Activated CD8-positive, alpha-beta T cell treated with anti-CD3 and anti-CD28 coated beads for 36 hours (primary cell): ENCODE measurements at regions of chr3 and their contacts with region 1.

Region 1: DNA sequence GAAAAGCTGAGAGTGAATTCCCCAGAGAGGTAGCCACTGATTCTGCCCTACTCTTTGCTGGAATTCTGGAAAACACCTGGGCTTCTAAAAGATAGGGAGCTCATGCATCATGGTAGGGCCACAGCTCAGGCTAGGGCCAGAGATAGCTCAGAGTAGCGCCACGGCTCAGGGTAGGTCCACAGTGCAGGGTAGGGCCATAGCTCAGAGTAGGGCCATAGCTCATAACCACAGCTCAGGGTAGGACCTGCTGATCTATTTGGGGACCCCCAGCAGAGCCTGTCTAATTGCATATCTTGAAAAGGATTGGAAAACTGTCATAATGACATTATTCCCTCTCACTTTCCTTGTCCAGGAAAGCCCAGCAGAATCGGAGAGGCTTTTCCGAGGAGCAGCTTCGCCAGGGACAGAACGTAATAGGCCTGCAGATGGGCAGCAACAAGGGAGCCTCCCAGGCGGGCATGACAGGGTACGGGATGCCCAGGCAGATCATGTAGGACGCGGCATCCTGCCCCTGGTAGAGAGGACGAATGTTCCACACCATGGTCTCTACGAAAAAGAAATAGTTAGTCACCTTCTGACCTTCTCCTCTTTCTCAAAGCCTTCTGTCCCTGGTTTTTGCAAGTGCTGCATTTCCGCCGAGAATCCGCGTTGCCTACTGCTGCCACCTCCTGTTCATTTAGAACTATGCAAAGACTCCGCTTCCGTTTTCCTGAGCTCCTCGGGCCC is 14.5 kb downstream of the TAGLN3 start:
- DNase-seq: peak; percentile 83
- ATAC-seq: peak; percentile 93
- H3K4me3 Mint-ChIP-seq: no peak overlapping the region
- H3K27ac Mint-ChIP-seq: peak overlapping the region; percentile 43
- H3K4me1 Mint-ChIP-seq: peaks cover 21% of the 10 kb centered on the region
- H3K27me3 Mint-ChIP-seq: no peaks in the 10 kb centered on the region
- CTCF ChIP-seq: peak; percentile 86

Region 2: DNA sequence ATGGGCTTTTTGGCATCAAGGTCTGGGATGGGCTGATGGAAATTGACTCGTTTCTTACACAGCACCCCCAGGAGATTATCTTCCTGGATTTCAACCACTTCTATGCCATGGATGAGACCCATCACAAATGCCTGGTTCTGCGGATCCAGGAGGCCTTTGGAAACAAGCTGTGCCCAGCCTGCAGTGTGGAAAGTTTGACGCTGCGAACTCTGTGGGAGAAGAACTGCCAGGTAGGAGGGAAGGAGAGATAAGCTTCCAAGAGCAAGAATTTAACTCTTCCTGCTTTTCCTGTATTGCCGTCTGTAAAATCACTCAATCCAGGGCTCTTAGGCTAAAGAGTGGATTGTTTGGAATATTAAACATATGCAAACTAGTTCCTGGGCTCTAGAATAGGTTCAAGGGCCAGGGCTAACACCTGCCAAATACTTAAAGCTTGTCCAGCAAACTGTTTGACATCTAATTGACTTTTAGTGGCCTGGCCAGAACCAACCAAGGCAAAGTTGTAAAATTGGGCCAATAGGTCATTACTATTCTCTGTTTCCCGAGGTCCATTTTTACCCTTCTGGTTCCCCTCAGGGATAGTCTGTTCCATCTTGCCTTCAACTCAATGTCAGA is 305.0 kb before region 1 on chr3:
- CTCF ChIA-PET with region 1: interaction called, 122 read pairs
- POLR2A ChIA-PET with region 1: no interaction called
- intact Hi-C with region 1: no loop called
- DNase-seq: no peak
- ATAC-seq: no peak
- H3K4me3 Mint-ChIP-seq: no peak overlapping the region
- H3K27ac Mint-ChIP-seq: no peak overlapping the region
- H3K4me1 Mint-ChIP-seq: peaks cover 35% of the 10 kb centered on the region
- H3K27me3 Mint-ChIP-seq: no peaks in the 10 kb centered on the region
- CTCF ChIP-seq: no peak

Region 3: GRCh38 chr3:111870620-111871019 is 142.6 kb before region 1 on chr3:
- CTCF ChIA-PET with region 1: interaction called, 12 read pairs
- POLR2A ChIA-PET with region 1: no interaction called
- intact Hi-C with region 1: no loop called
- DNase-seq: no peak
- ATAC-seq: no peak
- H3K4me3 Mint-ChIP-seq: no peak overlapping the region
- H3K27ac Mint-ChIP-seq: no peak overlapping the region
- H3K4me1 Mint-ChIP-seq: no peaks in the 10 kb centered on the region
- H3K27me3 Mint-ChIP-seq: no peaks in the 10 kb centered on the region
- CTCF ChIP-seq: no peak

Region 4: DNA sequence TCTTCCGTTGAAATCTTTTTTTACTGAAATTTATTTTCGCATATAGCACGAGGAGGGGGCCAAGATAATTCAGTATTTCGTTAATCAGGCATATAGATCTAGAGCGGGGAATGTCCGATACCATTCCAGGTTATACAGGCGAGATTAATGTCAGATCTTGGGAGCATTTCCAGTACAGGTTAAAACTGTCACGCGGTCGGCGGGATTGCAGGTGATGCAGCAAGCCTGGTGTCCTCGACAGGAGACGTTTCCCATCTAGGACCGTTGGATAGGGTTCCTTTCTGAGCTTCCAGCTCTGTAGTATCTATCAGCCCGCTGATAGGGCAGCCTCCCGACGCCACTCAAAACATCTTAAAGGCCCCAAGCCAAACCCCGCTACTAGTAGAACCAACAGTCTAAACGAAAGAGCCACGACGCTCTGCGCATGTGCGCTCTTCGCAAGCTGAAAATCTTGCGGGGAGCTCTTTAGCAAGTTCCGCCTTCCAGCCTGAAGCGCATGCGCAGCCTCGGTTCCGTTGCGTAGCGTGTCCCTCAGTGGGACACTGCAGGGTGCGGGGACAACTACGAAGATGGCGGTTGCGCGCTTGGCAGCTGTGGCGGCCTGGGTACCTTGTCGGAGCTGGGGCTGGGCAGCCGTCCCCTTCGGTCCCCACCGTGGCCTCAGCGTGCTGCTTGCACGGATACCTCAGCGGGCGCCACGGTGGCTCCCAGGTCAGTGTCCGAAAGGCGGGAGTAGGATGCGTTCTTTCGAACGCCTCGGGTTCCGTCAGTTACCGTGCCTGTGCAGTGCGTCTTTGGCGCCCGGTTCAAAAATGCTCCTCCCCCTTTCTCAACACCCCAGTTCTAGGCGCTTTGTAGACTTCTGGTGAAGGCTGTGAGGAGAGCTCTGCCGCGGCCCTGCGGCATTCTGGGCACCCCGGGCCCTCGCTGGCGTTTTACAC is 34.5 kb before region 1 on chr3 and contains the start of gene ABHD10:
- CTCF ChIA-PET with region 1: interaction called, 98 read pairs
- POLR2A ChIA-PET with region 1: interaction called, 14 read pairs
- intact Hi-C with region 1: no loop called
- DNase-seq: peak; percentile 98
- ATAC-seq: peak; percentile 94
- H3K4me3 Mint-ChIP-seq: peak within 1 kb of the TSS; percentile 92
- H3K27ac Mint-ChIP-seq: peak within 1 kb of the TSS; percentile 92
- H3K4me1 Mint-ChIP-seq: peaks cover 37% of the 10 kb centered on the region
- H3K27me3 Mint-ChIP-seq: no peaks in the 10 kb centered on the region
- CTCF ChIP-seq: no peak
- total RNA-seq, gene ABHD10: 59.4 to 66.5 TPM

Region 5: DNA sequence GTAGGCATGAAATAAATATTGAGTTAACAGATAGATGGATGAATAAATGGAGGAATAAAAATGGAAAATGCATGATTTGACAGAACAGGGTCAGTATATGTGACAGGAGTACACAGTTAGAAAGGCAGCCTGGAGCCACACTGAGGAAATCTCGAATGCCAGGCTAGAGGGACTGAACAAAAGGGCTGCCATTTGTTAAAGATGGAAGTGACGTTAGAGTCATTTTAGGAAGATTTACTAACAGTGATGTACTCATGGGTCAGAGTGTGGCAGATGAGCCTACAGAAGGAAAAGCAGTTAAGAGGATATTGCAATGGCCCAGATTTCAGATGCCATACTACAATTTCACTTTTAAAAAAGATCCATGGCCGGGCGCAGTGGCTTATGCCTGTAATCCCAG is 13.9 kb after region 1 on chr3:
- CTCF ChIA-PET with region 1: interaction called, 13 read pairs
- POLR2A ChIA-PET with region 1: no interaction called
- intact Hi-C with region 1: no loop called
- DNase-seq: no peak
- ATAC-seq: no peak
- H3K4me3 Mint-ChIP-seq: no peak overlapping the region
- H3K27ac Mint-ChIP-seq: no peak overlapping the region
- H3K4me1 Mint-ChIP-seq: no peaks in the 10 kb centered on the region
- H3K27me3 Mint-ChIP-seq: no peaks in the 10 kb centered on the region
- CTCF ChIP-seq: no peak

Region 6: DNA sequence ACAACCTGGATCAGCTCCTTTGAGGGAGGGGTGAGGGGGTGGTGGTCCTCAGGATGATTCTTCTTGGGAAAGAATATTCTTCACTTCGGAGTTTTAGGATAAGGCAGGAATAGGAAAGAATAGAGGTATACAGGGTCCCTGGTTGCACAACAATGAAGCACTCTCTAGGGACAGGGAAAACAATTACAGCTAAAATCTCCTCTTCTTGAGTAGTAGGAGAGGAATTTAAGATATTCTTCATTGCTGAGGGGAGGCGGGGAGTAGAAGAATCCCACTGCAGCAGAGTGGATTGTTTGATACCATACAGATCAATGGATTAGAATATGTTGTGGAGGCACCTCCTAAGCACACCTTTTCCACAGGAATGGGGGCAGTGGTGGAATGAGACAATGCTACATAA is 260.3 kb after region 1 on chr3:
- CTCF ChIA-PET with region 1: no interaction called
- POLR2A ChIA-PET with region 1: no interaction called
- intact Hi-C with region 1: no loop called
- DNase-seq: no peak
- ATAC-seq: no peak
- H3K4me3 Mint-ChIP-seq: no peak overlapping the region
- H3K27ac Mint-ChIP-seq: no peak overlapping the region
- H3K4me1 Mint-ChIP-seq: no peaks in the 10 kb centered on the region
- H3K27me3 Mint-ChIP-seq: peaks cover 5% of the 10 kb centered on the region
- CTCF ChIP-seq: no peak

Region 7: DNA sequence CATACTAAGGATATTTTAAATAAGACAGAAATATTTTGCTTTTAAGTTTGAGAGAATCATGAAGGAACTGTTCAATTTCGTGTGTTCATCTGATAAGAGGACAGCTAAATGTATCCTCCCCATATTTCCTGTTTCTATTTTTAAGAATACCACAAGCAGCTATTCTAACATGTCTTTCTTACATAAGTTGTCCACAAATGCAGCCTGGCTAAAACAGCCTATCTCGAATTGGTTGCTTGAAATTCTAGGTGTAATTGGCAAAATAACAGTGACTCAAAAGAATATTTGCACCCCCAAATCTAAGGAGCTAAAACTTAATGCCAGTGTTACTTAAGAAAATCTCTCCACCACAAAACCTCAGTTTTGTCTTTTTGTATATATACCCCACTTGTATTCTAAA is 451.0 kb after region 1 on chr3:
- CTCF ChIA-PET with region 1: no interaction called
- POLR2A ChIA-PET with region 1: no interaction called
- intact Hi-C with region 1: no loop called
- DNase-seq: no peak
- ATAC-seq: no peak
- H3K4me3 Mint-ChIP-seq: peak overlapping the region; percentile 37
- H3K27ac Mint-ChIP-seq: peak overlapping the region; percentile 89
- H3K4me1 Mint-ChIP-seq: peaks cover 84% of the 10 kb centered on the region
- H3K27me3 Mint-ChIP-seq: no peaks in the 10 kb centered on the region
- CTCF ChIP-seq: no peak